Esophagus muscularis mucosa (tissue), 4 donors: ENCODE measurements at regions of chr5 and their contacts with region 1.

Region 1: GRCh38 chr5:96729156-96729555 is 67.0 kb downstream of the CAST start:
- DNase-seq: no peak
- H3K4me3 ChIP-seq: no peak overlapping the region
- H3K27ac ChIP-seq: no peak overlapping the region
- H3K4me1 ChIP-seq: peaks cover 17 to 36% (median 23%) of the 10 kb centered on the region in 4 donors
- H3K27me3 ChIP-seq: no peaks in the 10 kb centered on the region
- CTCF ChIP-seq: peak; percentile 17 to 28 (median 19)
- EP300 ChIP-seq: no peak
- POLR2A ChIP-seq: no peak

Region 2: GRCh38 chr5:96344678-96345577 is 384.2 kb before region 1 on chr5:
- intact Hi-C with region 1: loop called (anchors 10 kb)
- DNase-seq: no peak
- H3K4me3 ChIP-seq: no peak overlapping the region
- H3K27ac ChIP-seq: no peak overlapping the region
- H3K4me1 ChIP-seq: peaks cover 0 to 5% (median 0%) of the 10 kb centered on the region in 4 donors
- H3K27me3 ChIP-seq: no peaks in the 10 kb centered on the region
- CTCF ChIP-seq: peak; percentile 49 to 71 (median 57)
- EP300 ChIP-seq: no peak
- POLR2A ChIP-seq: no peak

Region 3: GRCh38 chr5:96816411-96816939 is 87.3 kb after region 1 on chr5:
- intact Hi-C with region 1: no loop called
- DNase-seq: no peak
- H3K4me3 ChIP-seq: no peak overlapping the region
- H3K27ac ChIP-seq: no peak overlapping the region
- H3K4me1 ChIP-seq: peaks cover 0 to 3% (median 0%) of the 10 kb centered on the region in 4 donors
- H3K27me3 ChIP-seq: no peaks in the 10 kb centered on the region
- CTCF ChIP-seq: no peak
- EP300 ChIP-seq: no peak
- POLR2A ChIP-seq: no peak

Region 4: DNA sequence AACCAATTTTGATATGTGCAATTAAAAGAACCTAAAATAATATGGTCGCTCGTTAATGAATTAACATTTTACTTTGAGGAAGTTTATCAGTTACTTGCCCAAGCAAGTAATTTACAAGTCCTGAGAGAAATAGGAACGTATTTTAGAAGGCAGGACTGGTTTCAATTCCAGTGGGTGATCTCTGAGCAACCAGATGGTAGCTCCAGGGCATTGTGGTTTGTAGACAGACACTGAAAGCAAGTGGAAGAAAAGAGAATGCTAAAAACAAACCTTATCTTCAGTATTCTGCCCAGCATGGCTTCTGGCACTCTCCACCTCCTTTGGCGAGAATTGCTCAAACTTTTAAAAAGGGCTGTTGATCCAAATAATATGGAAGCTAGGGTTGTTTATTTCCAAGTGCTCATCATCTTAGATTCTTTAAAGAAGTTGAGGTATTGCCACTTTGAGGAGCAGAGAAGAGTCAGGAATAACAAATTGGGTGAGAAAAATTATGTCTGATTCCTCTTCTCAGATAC is 115.4 kb after region 1 on chr5:
- intact Hi-C with region 1: no loop called
- DNase-seq: no peak
- H3K4me3 ChIP-seq: no peak overlapping the region
- H3K27ac ChIP-seq: no peak overlapping the region
- H3K4me1 ChIP-seq: no peaks in the 10 kb centered on the region
- H3K27me3 ChIP-seq: no peaks in the 10 kb centered on the region
- CTCF ChIP-seq: no peak
- EP300 ChIP-seq: no peak
- POLR2A ChIP-seq: no peak